Calu3 (cell line): ENCODE measurements at regions of chr17 and their contacts with region 1.

Region 1: DNA sequence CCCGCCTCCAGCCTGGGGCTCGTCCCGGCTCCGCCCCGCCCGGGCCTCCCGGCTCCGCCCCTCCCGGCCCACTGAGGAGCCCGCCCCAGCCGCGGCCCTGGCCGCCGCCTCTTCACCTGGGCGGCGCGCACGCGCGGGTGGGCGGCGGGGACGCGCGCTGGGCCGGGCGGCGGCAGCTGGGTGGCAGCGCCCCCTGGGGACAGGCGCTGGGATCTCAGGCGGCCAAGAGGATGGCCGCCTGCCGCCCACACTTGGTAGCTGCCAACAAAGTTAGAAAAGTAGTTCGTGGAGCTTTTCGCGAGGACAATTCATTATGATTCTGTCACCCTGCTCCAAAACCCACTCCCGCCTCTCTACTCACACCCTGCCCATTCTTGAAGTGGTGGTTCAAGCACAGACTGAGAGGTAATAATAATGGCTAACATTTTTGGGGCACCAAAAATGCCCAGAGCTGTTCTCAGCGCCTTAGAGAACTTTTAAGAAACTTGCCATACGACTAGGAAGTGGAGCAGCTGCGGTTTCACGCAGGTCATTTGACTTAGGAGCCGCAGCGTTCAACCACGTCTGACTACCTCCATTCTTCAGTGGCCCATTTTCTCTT is 340 bp upstream of the MYO1D start:
- DNase-seq: peak; percentile 97
- H3K4me3 Mint-ChIP-seq: peak overlapping the region; percentile 49
- H3K27ac Mint-ChIP-seq: no peak overlapping the region
- H3K4me1 Mint-ChIP-seq: peaks cover 19% of the 10 kb centered on the region
- H3K27me3 Mint-ChIP-seq: no peaks in the 10 kb centered on the region
- CTCF ChIP-seq: peak; percentile 92

Region 2: GRCh38 chr17:32684087-32684958 is 192.9 kb before region 1 on chr17:
- CTCF ChIA-PET with region 1: no interaction called
- intact Hi-C with region 1: no loop called
- DNase-seq: no peak
- H3K4me3 Mint-ChIP-seq: no peak overlapping the region
- H3K27ac Mint-ChIP-seq: no peak overlapping the region
- H3K4me1 Mint-ChIP-seq: no peaks in the 10 kb centered on the region
- H3K27me3 Mint-ChIP-seq: no peaks in the 10 kb centered on the region
- CTCF ChIP-seq: no peak

Region 3: GRCh38 chr17:32783602-32784001 is 93.7 kb before region 1 on chr17:
- CTCF ChIA-PET with region 1: interaction called, 67 read pairs
- intact Hi-C with region 1: loop called (anchors 1 kb)
- DNase-seq: no peak
- H3K4me3 Mint-ChIP-seq: no peak overlapping the region
- H3K27ac Mint-ChIP-seq: no peak overlapping the region
- H3K4me1 Mint-ChIP-seq: no peaks in the 10 kb centered on the region
- H3K27me3 Mint-ChIP-seq: no peaks in the 10 kb centered on the region
- CTCF ChIP-seq: peak; percentile 64

Region 4: GRCh38 chr17:32794533-32795246 is 82.6 kb before region 1 on chr17:
- CTCF ChIA-PET with region 1: interaction called, 15 read pairs
- intact Hi-C with region 1: no loop called
- DNase-seq: peak; percentile 71
- H3K4me3 Mint-ChIP-seq: peak overlapping the region; percentile 51
- H3K27ac Mint-ChIP-seq: peak overlapping the region; percentile 75
- H3K4me1 Mint-ChIP-seq: peaks cover 38% of the 10 kb centered on the region
- H3K27me3 Mint-ChIP-seq: no peaks in the 10 kb centered on the region
- CTCF ChIP-seq: no peak

Region 5: DNA sequence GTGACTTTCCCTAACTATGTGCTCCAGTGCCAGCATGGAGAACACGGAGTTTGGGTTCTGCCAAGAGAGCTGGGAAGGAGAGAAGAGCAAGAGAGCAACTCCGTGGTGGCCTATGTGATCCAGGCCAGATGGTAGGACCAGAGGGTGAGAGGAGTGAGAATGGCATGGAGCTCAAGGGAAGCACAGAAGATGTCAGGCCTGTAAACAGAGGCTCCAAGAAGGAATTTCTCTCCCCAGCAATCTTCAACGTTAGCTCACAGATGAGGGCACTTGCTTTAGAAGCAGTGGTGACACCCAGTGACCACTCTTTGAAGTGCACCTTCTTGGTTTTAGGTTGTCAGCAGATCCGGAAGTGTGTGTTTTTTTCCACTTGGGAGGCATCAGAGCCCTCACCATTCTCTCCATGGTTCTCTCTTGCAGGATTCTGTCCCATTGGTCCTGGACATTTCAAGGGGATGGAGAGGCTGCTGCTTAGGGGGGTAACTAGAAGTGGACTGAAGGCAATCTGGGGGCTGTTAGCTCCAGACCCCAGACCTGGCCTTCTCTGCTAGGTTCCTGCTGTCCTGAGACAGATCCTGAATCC is 32.6 kb after region 1 on chr17:
- CTCF ChIA-PET with region 1: interaction called, 12 read pairs
- intact Hi-C with region 1: no loop called
- DNase-seq: peak; percentile 79
- H3K4me3 Mint-ChIP-seq: no peak overlapping the region
- H3K27ac Mint-ChIP-seq: no peak overlapping the region
- H3K4me1 Mint-ChIP-seq: no peaks in the 10 kb centered on the region
- H3K27me3 Mint-ChIP-seq: peaks cover 29% of the 10 kb centered on the region
- CTCF ChIP-seq: peak; percentile 71

Region 6: DNA sequence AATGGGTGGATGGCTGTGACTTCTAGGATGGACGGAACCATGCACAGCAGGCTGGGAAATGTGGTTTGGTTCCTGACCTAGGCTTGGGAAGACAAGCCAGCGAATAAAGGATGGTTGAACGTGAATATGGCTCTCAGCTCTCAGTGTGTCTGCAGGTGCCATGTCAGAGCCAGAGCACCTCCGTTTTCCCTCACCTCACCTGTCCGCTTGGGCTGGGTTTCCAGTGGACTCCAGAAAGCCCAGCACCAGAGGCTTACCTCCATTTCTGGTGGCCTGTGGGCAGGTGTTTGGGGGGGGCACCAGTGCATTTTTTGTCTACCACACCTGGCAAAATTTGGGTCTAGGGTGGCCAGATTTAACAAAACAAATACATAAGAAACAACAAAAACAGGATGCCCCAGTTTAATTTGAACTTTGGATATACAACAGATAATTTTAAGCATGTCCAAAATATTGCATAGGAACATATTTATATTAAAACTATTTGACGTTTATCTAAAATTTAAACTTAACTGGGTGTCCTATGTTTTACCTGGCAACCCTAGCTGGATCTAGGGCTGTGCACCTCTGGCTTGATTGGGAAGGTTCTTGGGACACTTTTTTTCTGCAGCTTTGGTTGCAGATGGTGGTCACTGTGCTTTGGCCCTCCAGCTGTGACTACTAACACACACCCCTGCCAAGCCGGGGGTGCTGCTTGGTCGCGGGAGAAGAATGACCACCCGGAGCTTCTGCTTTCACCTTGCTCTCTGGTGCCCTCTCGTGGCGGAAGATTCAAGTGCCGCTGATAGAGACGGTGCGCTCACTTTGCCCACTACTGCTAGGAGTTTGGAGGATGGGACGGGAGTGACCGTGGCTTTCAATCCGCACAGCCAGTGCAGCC is 120.7 kb after region 1 on chr17:
- CTCF ChIA-PET with region 1: interaction called, 10 read pairs
- intact Hi-C with region 1: no loop called
- DNase-seq: peak; percentile 83
- H3K4me3 Mint-ChIP-seq: peak overlapping the region; percentile 28
- H3K27ac Mint-ChIP-seq: no peak overlapping the region
- H3K4me1 Mint-ChIP-seq: peaks cover 8% of the 10 kb centered on the region
- H3K27me3 Mint-ChIP-seq: peaks cover 24% of the 10 kb centered on the region
- CTCF ChIP-seq: peak; percentile 82